Activated CD4-positive, alpha-beta T cell treated with anti-CD3 and anti-CD28 coated beads, Interleukin-2, amount 10 ng/mL, durations not matched to agents 24 days and 14 days (primary cell): ENCODE measurements at regions of chr11 and their contacts with region 1.

Region 1: GRCh38 chr11:65454696-65455456 is 32.3 kb downstream of the NEAT1 start:
- DNase-seq: peak; percentile 95
- H3K4me3 Mint-ChIP-seq: peak overlapping the region; percentile 94
- H3K27ac Mint-ChIP-seq: peak overlapping the region; percentile 83
- H3K4me1 Mint-ChIP-seq: peaks cover 25% of the 10 kb centered on the region
- H3K27me3 Mint-ChIP-seq: no peaks in the 10 kb centered on the region

Region 2: GRCh38 chr11:65440831-65441499 is 13.9 kb before region 1 on chr11:
- intact Hi-C with region 1: loop called (anchors 2 kb)
- DNase-seq: no peak
- H3K4me3 Mint-ChIP-seq: peak overlapping the region; percentile 48
- H3K27ac Mint-ChIP-seq: peak overlapping the region; percentile 87
- H3K4me1 Mint-ChIP-seq: peaks cover 54% of the 10 kb centered on the region
- H3K27me3 Mint-ChIP-seq: no peaks in the 10 kb centered on the region

Region 3: GRCh38 chr11:65487413-65488272 is 32.8 kb after region 1 on chr11:
- intact Hi-C with region 1: no loop called
- DNase-seq: peak; percentile 82
- H3K4me3 Mint-ChIP-seq: no peak overlapping the region
- H3K27ac Mint-ChIP-seq: peak overlapping the region; percentile 84
- H3K4me1 Mint-ChIP-seq: peaks cover 37% of the 10 kb centered on the region
- H3K27me3 Mint-ChIP-seq: no peaks in the 10 kb centered on the region

Region 4: DNA sequence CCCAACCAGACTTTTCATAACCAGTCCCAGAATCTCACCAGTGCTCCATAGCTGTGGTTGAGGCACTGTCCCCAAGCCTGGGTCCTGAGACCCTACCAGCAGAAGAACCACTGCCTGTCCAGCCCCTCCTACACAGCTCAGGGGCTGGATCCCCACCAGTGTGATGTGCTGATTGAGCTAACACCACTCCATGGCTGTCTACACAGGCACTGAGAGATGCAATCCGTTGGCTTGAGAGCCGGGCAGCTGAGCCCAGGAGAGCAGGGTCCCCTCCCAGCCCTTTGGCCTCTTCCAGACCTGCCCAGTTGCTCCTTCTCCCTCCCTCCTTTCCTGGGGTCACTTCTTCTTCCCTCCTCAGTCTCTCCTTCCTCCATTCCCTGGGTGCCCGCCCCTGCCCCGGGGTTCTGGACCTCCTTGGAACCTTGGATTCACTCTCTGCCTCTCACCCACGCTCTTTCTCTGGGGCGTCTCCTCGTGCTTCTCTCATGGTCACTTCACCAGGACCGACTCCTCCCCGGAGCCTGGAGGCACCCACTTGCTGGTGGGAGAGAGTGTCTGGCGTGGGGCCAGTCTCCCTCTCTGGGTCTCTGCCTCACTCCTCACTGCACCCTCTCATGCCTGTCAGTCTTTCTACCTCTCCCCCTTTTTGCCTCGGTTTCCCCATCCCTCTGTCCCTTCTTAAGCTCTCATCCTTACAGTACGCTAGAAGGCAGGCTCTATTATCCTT is 69.3 kb after region 1 on chr11:
- intact Hi-C with region 1: no loop called
- DNase-seq: peak; percentile 72
- H3K4me3 Mint-ChIP-seq: peak overlapping the region; percentile 75
- H3K27ac Mint-ChIP-seq: peak overlapping the region; percentile 93
- H3K4me1 Mint-ChIP-seq: peaks cover 49% of the 10 kb centered on the region
- H3K27me3 Mint-ChIP-seq: no peaks in the 10 kb centered on the region